Activated T-helper 1 cell treated with anti-CD3 and anti-CD28 coated beads, Interleukin-12 subunit alpha, Interleukin-12 subunit beta, Interleukin-2, Interleukin-4 antibody, amounts not matched to agents 30 ng/mL and 10 ng/mL and 1 ng/mL, durations not matched to agents 14 hours and 24 hours and 36 hours (primary cell): ENCODE measurements at regions of chr5 and their contacts with region 1.

Region 1: GRCh38 chr5:159456722-159457465 is 126.6 kb upstream of the IL12B start:
- DNase-seq: peak; percentile 59
- H3K4me3 Mint-ChIP-seq: peak overlapping the region; percentile 46
- H3K27ac Mint-ChIP-seq: peak overlapping the region; percentile 88
- H3K4me1 Mint-ChIP-seq: peaks cover 50% of the 10 kb centered on the region
- H3K27me3 Mint-ChIP-seq: peaks cover 50% of the 10 kb centered on the region

Region 2: GRCh38 chr5:159163027-159163700 is 293.7 kb before region 1 on chr5:
- intact Hi-C with region 1: loop called (anchors 1 kb)
- DNase-seq: no peak
- H3K4me3 Mint-ChIP-seq: peak overlapping the region; percentile 16
- H3K27ac Mint-ChIP-seq: peak overlapping the region; percentile 64
- H3K4me1 Mint-ChIP-seq: peaks cover 53% of the 10 kb centered on the region
- H3K27me3 Mint-ChIP-seq: no peaks in the 10 kb centered on the region

Region 3: GRCh38 chr5:159262859-159263567 is 193.9 kb before region 1 on chr5 and contains the start of gene UBLCP1:
- intact Hi-C with region 1: loop called (anchors 1 kb)
- DNase-seq: peak; percentile 71
- H3K4me3 Mint-ChIP-seq: peak within 1 kb of the TSS; percentile 96
- H3K27ac Mint-ChIP-seq: peak within 1 kb of the TSS; percentile 98
- H3K4me1 Mint-ChIP-seq: peaks cover 21% of the 10 kb centered on the region
- H3K27me3 Mint-ChIP-seq: peaks cover 2% of the 10 kb centered on the region
- total RNA-seq, gene UBLCP1: 30.8 and 32.3 TPM in 2 replicates

Region 4: DNA sequence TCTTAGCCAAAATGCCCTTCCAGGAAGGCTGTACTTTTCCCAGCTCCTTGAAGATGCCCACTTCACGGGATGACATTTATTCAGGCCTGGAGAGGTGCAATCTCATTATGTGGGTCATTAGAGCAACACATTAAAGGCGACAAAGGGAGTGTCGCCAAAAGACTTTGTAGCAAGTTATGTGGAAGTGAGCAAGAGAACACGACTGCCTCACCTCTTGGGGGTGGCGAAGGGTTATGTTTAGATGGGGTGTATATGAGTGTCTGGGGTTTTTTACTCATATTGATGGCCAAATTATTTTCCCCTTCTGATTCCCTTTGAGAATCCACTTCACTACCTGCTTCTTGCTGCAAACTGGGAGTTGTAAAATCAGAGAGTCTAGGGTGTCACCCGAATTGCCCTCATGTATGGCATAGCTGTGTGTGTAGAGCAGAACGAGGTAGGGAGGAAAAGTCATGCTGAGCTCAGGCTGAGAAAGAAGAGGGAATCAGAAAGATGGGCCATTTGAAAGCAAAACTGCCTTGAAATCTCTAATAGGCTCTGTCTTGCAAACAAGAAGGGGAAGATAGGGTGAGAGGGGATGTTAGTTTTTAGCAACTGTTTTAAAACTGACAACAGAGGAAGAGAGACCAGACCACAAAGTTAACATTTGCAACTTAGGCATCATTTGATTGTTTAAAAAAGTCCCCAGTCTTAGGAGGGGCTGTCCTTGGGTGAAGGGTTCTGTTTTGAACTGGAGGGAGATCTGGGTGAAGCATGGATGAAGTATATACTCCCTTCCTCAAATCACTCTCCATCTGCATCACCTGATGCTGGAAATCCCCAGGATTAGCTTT is 29.5 kb before region 1 on chr5:
- intact Hi-C with region 1: loop called (anchors 1 kb)
- DNase-seq: no peak
- H3K4me3 Mint-ChIP-seq: no peak overlapping the region
- H3K27ac Mint-ChIP-seq: peak overlapping the region; percentile 13
- H3K4me1 Mint-ChIP-seq: peaks cover 66% of the 10 kb centered on the region
- H3K27me3 Mint-ChIP-seq: peaks cover 3% of the 10 kb centered on the region

Region 5: GRCh38 chr5:159764283-159765134 is 307.6 kb after region 1 on chr5:
- intact Hi-C with region 1: no loop called
- DNase-seq: no peak
- H3K4me3 Mint-ChIP-seq: no peak overlapping the region
- H3K27ac Mint-ChIP-seq: peak overlapping the region; percentile 24
- H3K4me1 Mint-ChIP-seq: peaks cover 10% of the 10 kb centered on the region
- H3K27me3 Mint-ChIP-seq: peaks cover 20% of the 10 kb centered on the region

Region 6: GRCh38 chr5:160008877-160009590 is 552.1 kb after region 1 on chr5 and contains the start of gene TTC1:
- intact Hi-C with region 1: loop called (anchors 1 kb)
- DNase-seq: peak; percentile 90
- H3K4me3 Mint-ChIP-seq: peak within 1 kb of the TSS; percentile 91
- H3K27ac Mint-ChIP-seq: peak within 1 kb of the TSS; percentile 91
- H3K4me1 Mint-ChIP-seq: peaks cover 29% of the 10 kb centered on the region
- H3K27me3 Mint-ChIP-seq: peaks cover 4% of the 10 kb centered on the region
- total RNA-seq, gene TTC1: 65.9 and 69.1 TPM in 2 replicates